ENCODE measurements at regions of chr4 and their contacts with region 1.

Region 1: GRCh38 chr4:142585411-142585810 is 260.7 kb downstream of the INPP4B start:
- DNase-seq: no peak

Region 2: DNA sequence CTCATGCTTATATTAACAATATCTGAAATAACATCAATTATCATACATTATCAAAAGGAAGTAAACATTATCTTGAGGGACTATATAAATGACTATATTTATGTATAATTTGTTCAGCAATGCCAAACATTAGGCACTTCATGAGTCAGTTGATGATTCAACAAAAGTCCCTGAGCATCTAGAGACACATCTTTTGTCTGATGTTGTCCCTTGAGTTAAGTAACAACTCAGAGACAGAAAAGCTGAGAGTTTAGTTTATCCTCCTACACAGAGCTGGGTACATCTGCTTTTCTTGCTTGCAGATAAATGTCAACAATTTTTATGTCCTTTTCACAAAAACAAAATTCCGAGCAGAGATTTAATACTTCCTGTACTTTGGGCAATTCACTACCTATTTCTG is 50.4 kb before region 1 on chr4:
- intact Hi-C with region 1: no loop called
- DNase-seq: no peak

Region 3: GRCh38 chr4:142600971-142601370 is 15.6 kb after region 1 on chr4:
- intact Hi-C with region 1: loop called (anchors 2 kb)
- DNase-seq: no peak

Measured in cardiac septum (tissue), 1 donor.